CD8-positive, alpha-beta memory T cell (primary cell): ENCODE measurements at regions of chr9 and their contacts with region 1.

Region 1: DNA sequence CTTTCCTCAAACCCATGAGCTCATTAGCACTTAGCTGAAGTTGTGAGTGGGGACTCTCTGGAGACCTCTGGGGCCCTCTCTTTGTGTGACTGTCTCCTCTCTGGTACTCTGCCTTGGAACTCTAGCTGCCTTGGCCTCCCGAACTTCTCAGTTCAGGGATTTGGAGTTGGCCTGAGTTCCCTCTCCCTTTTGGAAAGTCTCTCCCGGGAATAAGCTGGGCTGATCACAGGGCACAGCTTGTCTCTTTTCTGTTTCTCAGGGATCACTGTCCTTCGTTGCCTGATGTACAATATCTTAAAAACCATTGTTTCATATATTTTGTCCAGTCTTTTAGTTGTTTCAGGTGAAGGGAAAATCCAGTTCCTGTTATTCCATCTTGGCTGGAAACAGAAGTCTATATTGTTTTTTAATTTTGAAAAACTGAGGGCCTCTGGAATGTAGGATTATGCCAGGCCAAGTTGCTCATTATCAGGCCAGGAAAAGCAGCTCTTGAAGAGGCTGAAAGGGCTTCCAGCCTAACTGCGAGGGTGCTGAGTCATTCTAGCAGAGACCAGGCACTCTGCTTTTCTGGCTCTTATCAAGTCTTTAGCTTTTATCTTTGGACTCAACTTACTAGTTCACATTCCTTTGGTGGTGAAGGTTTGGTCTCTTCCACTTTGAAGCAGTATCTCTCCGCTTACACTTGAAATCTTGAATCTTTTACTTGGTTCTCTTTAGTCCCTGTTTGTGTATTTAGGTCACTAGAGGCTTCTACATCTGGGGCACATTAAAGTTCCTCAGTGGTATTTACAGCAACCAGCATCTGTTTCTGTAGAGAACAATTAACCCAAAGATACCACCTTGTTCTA is 8.4 kb upstream of the RGS3 start:
- DNase-seq: no peak
- H3K4me3 ChIP-seq: no peak overlapping the region
- H3K4me3 Mint-ChIP-seq: no peak overlapping the region
- H3K27ac ChIP-seq: no peak overlapping the region
- H3K27ac Mint-ChIP-seq: peak overlapping the region in 4 of 8 donors; percentile 35 to 96 (median 56)
- H3K4me1 ChIP-seq: no peaks in the 10 kb centered on the region
- H3K4me1 Mint-ChIP-seq: peaks cover 1 to 8% (median 8%) of the 10 kb centered on the region in 3 donors
- H3K27me3 ChIP-seq: no peaks in the 10 kb centered on the region
- H3K27me3 Mint-ChIP-seq: peaks cover 0 to 1% of the 10 kb centered on the region in 2 donors

Region 2: GRCh38 chr9:113215135-113215534 is 240.0 kb before region 1 on chr9:
- CTCF ChIA-PET with region 1: no interaction called
- POLR2A ChIA-PET with region 1: interaction called, 14 read pairs
- DNase-seq: peak in 1 of 5 donors; percentile 31
- H3K4me3 ChIP-seq: no peak overlapping the region
- H3K4me3 Mint-ChIP-seq: no peak overlapping the region
- H3K27ac ChIP-seq: no peak overlapping the region
- H3K27ac Mint-ChIP-seq: peak overlapping the region in 5 of 8 donors; percentile 8 to 64 (median 30)
- H3K4me1 ChIP-seq: peaks cover 18% of the 10 kb centered on the region
- H3K4me1 Mint-ChIP-seq: peaks cover 42 to 67% (median 50%) of the 10 kb centered on the region in 3 donors
- H3K27me3 ChIP-seq: no peaks in the 10 kb centered on the region
- H3K27me3 Mint-ChIP-seq: no peaks in the 10 kb centered on the region

Region 3: DNA sequence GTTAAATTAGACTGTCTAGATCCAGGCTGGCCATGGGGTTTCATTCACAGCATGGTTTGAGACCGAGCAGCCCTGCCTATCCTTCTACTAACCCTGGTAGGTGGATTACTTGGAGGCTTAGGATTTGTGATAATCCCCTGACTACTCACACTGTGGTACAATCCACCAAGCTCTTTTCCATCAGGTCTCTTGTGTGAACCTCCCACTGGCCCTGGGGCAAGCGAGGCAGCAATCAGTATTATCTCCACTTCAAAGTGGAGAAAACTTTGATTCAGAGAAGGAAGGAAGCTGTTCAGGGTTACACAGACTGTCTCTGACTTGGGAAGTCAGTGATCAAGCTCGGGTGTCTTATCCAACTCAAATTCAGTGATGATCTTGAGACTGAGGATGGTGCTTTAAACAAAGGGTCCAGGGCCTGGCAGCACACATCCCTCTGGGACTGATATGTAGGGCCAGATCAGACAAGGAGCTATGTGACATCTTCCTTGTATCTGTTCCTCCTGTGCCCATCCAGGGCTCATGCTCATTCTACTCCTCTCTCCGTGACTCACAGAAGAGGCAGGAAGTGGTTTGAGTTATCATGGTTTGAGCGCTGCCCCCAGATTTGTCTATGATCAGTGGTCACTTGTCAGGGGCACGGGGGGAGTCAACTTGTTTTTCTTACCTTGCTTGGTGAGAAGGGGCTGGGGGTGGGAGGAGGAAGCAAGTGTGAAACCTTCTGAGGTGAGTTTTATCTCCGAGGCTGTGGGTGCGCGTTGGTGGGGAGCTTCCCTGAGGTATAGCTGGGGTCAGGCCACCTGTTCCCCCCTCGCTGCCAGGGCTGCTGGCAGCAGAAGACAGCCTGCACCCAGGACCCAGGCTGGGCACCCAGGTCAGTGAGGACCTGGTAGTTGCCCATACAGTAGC is 57.0 kb after region 1 on chr9:
- CTCF ChIA-PET with region 1: no interaction called
- POLR2A ChIA-PET with region 1: no interaction called
- DNase-seq: peak; percentile 62 to 89 (median 69)
- H3K4me3 ChIP-seq: peak overlapping the region; percentile 39
- H3K4me3 Mint-ChIP-seq: peak overlapping the region; percentile 39 to 76 (median 73)
- H3K27ac ChIP-seq: peak overlapping the region; percentile 43
- H3K27ac Mint-ChIP-seq: peak overlapping the region; percentile 89 to 98 (median 94)
- H3K4me1 ChIP-seq: peaks cover 64% of the 10 kb centered on the region
- H3K4me1 Mint-ChIP-seq: peaks cover 60 to 72% (median 64%) of the 10 kb centered on the region in 3 donors
- H3K27me3 ChIP-seq: no peaks in the 10 kb centered on the region
- H3K27me3 Mint-ChIP-seq: peaks cover 0 to 1% of the 10 kb centered on the region in 2 donors